Breast epithelium (tissue), 4 donors: ENCODE measurements at regions of chr5 and their contacts with region 1.

Region 1: GRCh38 chr5:154984946-154985516 is 28.5 kb upstream of the KIF4B start:
- DNase-seq: no peak
- H3K4me3 ChIP-seq: no peak overlapping the region
- H3K27ac ChIP-seq: no peak overlapping the region
- H3K4me1 ChIP-seq: no peaks in the 10 kb centered on the region
- H3K27me3 ChIP-seq: no peaks in the 10 kb centered on the region
- CTCF ChIP-seq: no peak
- POLR2A ChIP-seq: no peak

Region 2: GRCh38 chr5:156000115-156000514 is 1015.1 kb after region 1 on chr5:
- intact Hi-C with region 1: loop called (anchors 5 kb)
- DNase-seq: no peak
- H3K4me3 ChIP-seq: no peak overlapping the region
- H3K27ac ChIP-seq: no peak overlapping the region
- H3K4me1 ChIP-seq: no peaks in the 10 kb centered on the region
- H3K27me3 ChIP-seq: no peaks in the 10 kb centered on the region
- CTCF ChIP-seq: no peak
- POLR2A ChIP-seq: no peak